Posterior vena cava (tissue), 2 donors: ENCODE measurements at regions of chr14 and their contacts with region 1.

Region 1: DNA sequence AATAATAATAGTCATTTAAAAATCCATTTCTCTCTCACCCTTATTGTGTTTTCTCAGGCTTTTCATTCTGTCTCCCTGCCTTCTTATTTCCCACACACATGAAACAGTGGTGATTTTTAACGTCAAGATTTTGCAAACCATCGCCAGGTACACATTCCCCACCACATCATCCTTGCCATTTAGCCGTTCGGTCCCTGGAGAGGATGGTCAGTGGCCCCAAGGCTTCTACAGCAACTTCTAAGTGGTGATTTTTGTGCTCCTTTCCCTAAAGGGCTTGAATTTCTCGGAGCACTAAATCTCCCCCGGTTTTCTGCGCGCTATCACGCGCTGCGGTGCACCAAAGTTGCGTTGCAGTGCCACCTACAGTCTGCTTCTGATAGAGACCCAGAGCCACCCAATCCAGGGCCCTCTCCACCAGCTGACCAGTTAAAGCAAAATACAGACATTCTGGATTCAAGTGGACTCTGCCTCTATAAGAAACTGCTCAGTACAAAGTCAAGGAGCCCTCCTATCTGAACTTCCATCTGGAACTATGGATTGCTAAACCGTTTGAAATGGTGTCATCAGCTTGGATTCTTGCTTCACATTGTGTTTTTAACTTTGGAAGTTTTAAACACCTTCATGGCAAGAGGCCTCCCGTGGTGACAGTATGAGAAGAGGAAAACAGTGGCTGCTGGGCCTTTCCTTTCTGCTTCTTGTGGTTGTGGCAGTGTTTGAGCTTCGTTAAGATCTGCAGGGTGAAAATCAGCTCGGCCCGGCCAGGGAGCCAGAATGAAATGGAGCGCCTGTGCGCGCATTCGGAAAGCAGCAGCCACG is 234.0 kb downstream of the SPTSSA start:
- DNase-seq: peak; percentile 81

Region 2: GRCh38 chr14:33848706-33849454 is 379.2 kb before region 1 on chr14:
- intact Hi-C with region 1: loop called in 1 of 2 experiments (anchors 5 kb)
- DNase-seq: peak; percentile 77

Region 3: DNA sequence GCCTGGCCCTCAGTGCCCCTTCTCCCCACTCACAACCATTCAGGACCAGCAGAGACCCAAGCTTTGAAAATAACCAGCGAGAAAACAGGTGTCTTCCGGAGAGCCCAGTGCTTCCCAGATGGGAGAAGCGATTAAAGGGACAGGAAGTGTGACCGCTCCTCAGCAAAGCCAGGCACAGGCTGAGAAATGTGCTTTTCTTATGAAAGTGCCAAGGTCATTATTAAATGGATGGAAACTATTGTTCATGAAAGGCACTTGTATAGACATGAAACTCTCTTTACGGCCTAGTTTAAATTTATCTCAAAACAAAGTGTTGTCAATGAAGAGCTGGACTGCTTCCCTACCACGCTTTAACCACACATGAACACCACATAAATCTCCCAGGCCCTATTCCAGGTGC is 23.6 kb after region 1 on chr14:
- intact Hi-C with region 1: loop called in 1 of 2 experiments (anchors 2 kb)
- DNase-seq: no peak